Activated T-helper 2 cell treated with anti-CD3 and anti-CD28 coated beads, Interferon-gamma antibody, Interleukin-2, Interleukin-4, amounts not matched to agents 10 μg/mL and 5 μg/mL and 100 μg/mL, durations not matched to agents 14 hours and 24 hours and 36 hours (primary cell): ENCODE measurements at regions of chr6 and their contacts with region 1.

Region 1: DNA sequence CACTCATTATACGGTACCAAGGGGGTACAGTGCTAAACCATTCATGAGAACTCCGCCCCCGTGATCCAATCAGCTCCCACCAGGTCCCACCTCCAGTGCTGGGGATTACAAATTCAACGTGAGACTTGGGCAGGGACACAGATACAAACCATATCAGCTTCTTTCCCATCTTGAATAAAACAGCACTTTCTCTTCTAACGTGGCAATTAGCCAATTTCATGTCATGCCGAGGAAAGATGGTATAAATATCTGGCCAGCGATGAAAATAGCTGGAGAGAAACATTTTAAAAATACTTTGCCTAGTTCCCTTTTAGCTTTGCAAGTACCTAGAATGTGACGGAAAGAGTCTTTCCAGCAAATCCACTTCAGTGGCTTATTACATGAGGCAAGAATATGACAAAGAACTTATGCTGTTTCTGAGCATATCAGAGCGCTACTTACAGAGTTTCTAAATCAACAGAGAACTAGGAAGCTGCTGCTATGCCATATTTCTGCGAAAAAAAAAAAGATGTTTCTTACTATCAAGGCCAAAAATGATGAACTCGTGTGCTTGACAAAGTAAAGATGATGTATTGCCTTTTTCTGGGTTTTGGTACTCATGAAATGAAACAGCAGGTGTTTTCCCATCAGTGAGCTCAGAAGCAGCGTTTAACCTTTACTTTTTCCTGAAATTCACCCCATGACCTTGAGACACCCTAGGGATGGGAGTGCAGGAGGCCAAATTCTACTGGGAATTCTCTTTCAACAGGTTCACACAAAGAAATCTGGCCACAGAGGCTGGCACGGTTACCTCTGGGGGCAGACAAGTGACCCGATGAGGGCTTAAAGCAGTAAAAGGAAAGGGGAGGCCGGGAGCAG is 37.9 kb downstream of the AGPAT4 start:
- DNase-seq: no peak
- H3K4me3 Mint-ChIP-seq: no peak overlapping the region
- H3K27ac Mint-ChIP-seq: peak overlapping the region; percentile 40
- H3K4me1 Mint-ChIP-seq: peaks cover 21% of the 10 kb centered on the region
- H3K27me3 Mint-ChIP-seq: no peaks in the 10 kb centered on the region

Region 2: DNA sequence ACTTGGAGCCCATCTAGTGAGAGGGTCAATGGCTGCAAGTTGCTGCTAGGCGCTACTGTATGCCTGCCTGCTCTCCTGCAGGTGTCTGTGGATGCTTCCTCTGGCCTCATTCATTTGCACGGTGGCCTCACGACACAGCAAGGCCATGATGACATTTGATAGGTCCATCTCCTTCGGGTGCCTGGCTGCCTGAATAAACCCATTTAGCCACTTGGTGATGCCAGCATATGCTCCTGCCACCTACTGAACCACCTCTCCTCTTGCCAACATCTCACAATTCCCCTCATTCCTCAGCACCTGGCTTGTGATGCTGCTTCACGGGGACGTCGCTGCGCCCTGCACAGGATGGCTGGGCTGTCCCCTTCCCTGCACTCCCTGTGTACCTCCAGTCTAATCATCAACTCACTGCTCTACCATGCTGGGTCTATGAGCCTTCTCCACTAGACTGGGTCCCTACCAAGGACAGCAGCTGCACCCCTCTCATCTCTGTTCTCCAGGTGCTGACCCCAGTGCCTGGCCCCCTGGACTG is 13.2 kb before region 1 on chr6:
- intact Hi-C with region 1: loop called (anchors 2 kb)
- DNase-seq: no peak
- H3K4me3 Mint-ChIP-seq: no peak overlapping the region
- H3K27ac Mint-ChIP-seq: no peak overlapping the region
- H3K4me1 Mint-ChIP-seq: peaks cover 37% of the 10 kb centered on the region
- H3K27me3 Mint-ChIP-seq: no peaks in the 10 kb centered on the region